ENCODE measurements at regions of chr15 and their contacts with region 1.

Region 1: DNA sequence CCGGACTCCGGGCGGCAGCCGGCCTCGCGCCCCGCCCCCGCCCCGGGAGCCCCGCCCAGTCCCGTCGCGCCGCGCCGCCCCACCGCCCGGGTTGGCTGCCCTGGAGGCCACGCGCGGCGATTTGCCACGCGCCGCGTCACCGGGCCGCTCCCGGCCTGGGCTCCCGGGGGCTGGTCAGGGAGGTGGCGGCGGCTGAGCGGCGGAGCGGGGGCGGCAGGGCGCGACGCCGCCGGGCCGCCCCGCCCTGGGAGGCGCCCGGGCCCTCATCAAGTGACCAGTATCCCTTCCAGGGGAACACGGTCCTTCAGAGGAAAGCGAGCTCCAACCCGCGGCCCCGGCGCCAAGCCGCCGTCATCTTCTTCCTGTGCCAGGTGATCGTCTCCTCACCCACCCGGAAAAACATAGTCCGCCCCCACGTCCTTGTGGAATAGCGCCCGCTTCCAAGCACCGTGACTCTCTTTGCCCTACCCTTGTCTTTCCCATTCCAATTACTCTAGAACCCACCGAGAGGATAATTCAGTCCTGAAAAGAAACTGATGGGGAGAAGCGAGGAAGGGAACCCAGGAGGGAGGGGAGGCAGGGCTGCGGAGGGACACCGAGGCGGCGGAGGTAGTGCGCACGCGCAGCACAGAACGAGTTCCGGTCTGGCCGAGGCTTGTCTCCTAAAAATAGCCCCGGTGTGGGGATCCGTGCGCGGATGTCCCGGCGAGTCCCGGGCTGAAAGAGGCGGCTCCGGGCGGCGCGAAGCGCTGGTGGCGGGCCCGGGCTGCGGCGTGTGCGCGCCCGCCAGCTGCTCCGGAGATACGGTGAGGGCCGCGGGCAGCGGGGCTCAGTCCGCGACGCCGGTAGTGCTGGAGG is at the start of gene MEF2A:
- DNase-seq: peak; percentile 91

Region 2: GRCh38 chr15:99536422-99537040 is 29.0 kb before region 1 on chr15:
- CTCF ChIA-PET with region 1: no interaction called
- POLR2A ChIA-PET with region 1: no interaction called
- DNase-seq: no peak

Region 3: GRCh38 chr15:99582508-99582960 is 17.0 kb after region 1 on chr15:
- CTCF ChIA-PET with region 1: no interaction called
- POLR2A ChIA-PET with region 1: interaction called, 10 read pairs
- DNase-seq: no peak

Region 4: GRCh38 chr15:99682455-99682854 is 116.9 kb after region 1 on chr15:
- CTCF ChIA-PET with region 1: no interaction called
- POLR2A ChIA-PET with region 1: no interaction called
- DNase-seq: no peak

Measured in HEK293T (cell line).